Mammary epithelial cell (primary cell): ENCODE measurements at regions of chr7 and their contacts with region 1.

Region 1: GRCh38 chr7:102044984-102045673 is 227.7 kb downstream of the CUX1 start:
- DNase-seq: no peak
- H3K4me3 ChIP-seq: no peak overlapping the region
- H3K27ac ChIP-seq: no peak overlapping the region
- H3K4me1 ChIP-seq: peaks cover 9% of the 10 kb centered on the region
- H3K27me3 ChIP-seq: no peaks in the 10 kb centered on the region
- CTCF ChIP-seq: no peak

Region 2: GRCh38 chr7:102008535-102009345 is 36.4 kb before region 1 on chr7:
- CTCF ChIA-PET with region 1: no interaction called
- dilution Hi-C with region 1: loop called (anchors 5 kb)
- in situ Hi-C with region 1: no loop called
- intact Hi-C with region 1: no loop called
- DNase-seq: peak; percentile 70
- H3K4me3 ChIP-seq: no peak overlapping the region
- H3K27ac ChIP-seq: no peak overlapping the region
- H3K4me1 ChIP-seq: peaks cover 7% of the 10 kb centered on the region
- H3K27me3 ChIP-seq: no peaks in the 10 kb centered on the region
- CTCF ChIP-seq: no peak

Region 3: DNA sequence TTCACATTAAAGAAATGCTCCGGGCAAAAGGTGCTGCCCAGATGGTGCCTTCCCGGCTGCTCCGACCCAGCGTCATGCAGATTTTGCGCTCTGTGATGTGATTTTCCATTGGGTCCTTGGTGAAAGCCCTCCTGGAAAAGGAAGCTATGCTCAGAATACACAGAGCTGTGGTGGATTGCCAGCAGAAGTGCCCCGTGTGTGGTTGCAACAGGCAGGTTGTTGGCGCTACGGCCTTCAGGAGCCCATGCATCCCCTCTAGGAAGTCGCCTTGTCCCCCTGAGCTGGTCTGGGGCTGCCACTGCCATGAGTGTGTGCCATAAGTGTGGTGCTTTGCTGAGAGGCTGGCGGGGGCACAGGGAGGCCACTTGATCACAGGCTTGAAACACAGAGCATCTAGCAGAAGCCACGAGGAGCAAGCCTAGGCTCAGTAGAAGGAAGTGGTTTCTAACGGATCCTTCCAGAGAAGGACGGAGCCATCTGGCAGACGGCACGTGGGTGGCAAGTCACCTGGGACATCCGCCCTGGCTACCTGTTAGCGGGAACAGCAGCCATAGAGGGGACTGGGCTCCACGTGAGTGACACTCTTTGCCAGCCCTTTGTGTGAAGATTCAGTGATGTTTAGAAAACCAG is 16.8 kb before region 1 on chr7:
- CTCF ChIA-PET with region 1: no interaction called
- dilution Hi-C with region 1: no loop called
- in situ Hi-C with region 1: no loop called
- intact Hi-C with region 1: no loop called
- DNase-seq: no peak
- H3K4me3 ChIP-seq: no peak overlapping the region
- H3K27ac ChIP-seq: no peak overlapping the region
- H3K4me1 ChIP-seq: no peaks in the 10 kb centered on the region
- H3K27me3 ChIP-seq: no peaks in the 10 kb centered on the region
- CTCF ChIP-seq: no peak

Region 4: DNA sequence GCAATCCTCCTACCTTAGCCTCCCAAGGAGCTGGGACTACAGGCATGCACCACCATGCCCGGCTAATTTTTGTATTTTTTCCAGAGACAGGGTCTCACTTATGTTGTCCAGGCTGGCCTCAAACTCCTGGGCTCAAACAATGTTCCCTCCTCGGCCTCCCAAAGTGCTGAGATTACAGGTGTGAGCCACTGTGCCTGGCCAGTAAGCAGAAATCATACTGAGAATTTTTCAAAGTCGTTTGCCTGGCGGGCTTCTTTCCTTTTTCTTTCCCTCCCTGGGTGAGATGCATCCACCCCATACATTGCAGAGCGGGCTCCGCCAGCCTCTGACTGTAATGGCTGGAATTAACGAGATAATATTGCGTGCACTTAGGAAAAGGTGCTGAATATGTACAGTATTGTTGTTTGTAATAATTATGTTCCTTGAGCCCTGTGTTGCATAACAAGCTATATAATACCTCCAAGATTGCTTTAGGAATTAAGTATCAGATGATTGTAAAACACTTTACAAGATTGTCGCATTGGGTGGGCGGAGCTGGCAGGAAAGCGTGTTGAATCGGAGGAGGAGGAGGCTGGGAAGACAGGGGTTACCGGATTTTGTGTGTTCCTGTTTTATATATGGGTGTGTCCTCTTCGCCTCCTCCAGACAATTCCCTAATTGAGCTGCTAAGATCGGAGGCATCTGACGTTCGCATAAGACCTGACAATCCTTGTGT is 48.3 kb after region 1 on chr7:
- CTCF ChIA-PET with region 1: no interaction called
- dilution Hi-C with region 1: loop called (anchors 5 kb)
- in situ Hi-C with region 1: no loop called
- intact Hi-C with region 1: no loop called
- DNase-seq: no peak
- H3K4me3 ChIP-seq: no peak overlapping the region
- H3K27ac ChIP-seq: no peak overlapping the region
- H3K4me1 ChIP-seq: no peaks in the 10 kb centered on the region
- H3K27me3 ChIP-seq: no peaks in the 10 kb centered on the region
- CTCF ChIP-seq: no peak

Region 5: DNA sequence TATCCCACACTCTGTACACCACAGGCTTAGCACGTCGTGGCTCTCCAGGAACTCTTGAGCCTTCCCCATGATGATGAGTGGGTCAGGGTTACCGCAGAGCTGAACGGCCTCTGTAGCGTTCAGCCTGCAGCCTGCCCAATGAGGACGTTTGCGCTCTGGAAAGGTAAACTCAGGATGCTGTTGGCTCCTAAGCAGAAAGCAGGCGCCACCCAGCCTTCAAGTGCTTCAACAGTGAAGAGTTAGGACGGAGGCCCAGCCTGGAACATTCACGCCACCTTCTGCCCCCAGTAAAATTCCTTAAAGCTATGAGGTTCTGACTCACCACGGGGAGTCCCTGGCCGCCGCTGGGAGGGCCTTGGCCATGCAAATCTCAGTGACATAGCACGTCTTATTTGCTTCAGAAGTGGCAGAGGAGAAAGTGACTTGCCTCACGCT is 80.0 kb after region 1 on chr7:
- CTCF ChIA-PET with region 1: no interaction called
- dilution Hi-C with region 1: loop called (anchors 5 kb)
- in situ Hi-C with region 1: no loop called
- intact Hi-C with region 1: no loop called
- DNase-seq: no peak
- H3K4me3 ChIP-seq: no peak overlapping the region
- H3K27ac ChIP-seq: no peak overlapping the region
- H3K4me1 ChIP-seq: peaks cover 10% of the 10 kb centered on the region
- H3K27me3 ChIP-seq: no peaks in the 10 kb centered on the region
- CTCF ChIP-seq: no peak

Region 6: DNA sequence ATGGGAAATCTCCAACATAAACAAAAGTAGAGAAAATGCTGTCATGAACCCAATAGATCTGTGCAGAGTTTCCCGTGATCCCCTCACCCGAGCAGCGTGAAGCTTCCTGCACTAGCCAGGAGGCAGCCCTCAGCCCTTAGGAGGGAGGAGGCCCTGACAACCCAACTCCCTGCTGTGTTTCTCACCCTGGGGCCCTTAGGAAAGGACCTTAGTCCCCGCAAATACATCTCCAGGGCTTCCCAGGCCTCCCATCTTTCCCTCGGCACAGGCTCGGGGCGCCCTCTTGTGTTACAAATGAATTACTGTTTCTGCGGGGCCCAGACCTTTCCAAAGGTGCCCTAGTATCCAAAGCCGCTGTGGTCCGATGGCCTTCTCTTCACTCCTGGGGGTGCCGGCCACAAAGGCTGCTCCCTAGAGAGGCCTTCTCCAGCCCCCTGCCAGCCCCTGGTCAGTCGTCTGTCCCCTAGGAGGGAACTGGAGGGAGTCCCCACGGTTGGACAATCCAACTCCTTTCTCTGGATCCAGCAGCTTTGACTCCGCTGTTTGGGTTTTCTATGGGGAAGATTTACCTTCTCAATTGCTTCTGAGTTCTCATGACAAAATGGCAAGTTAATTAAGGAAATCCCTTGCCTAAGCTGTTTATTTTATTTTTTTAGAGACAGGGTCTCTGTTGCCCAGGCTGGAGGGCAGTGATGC is 191.6 kb after region 1 on chr7:
- CTCF ChIA-PET with region 1: no interaction called
- dilution Hi-C with region 1: no loop called
- in situ Hi-C with region 1: no loop called
- intact Hi-C with region 1: no loop called
- DNase-seq: peak; percentile 44
- H3K4me3 ChIP-seq: no peak overlapping the region
- H3K27ac ChIP-seq: no peak overlapping the region
- H3K4me1 ChIP-seq: no peaks in the 10 kb centered on the region
- H3K27me3 ChIP-seq: no peaks in the 10 kb centered on the region
- CTCF ChIP-seq: peak; percentile 78 to 87